Activated CD8-positive, alpha-beta memory T cell treated with anti-CD3 and anti-CD28 coated beads, Interleukin-2, amount 10 ng/mL, durations not matched to agents 7 days and 5 days (primary cell): ENCODE measurements at regions of chr6 and their contacts with region 1.

Region 1: DNA sequence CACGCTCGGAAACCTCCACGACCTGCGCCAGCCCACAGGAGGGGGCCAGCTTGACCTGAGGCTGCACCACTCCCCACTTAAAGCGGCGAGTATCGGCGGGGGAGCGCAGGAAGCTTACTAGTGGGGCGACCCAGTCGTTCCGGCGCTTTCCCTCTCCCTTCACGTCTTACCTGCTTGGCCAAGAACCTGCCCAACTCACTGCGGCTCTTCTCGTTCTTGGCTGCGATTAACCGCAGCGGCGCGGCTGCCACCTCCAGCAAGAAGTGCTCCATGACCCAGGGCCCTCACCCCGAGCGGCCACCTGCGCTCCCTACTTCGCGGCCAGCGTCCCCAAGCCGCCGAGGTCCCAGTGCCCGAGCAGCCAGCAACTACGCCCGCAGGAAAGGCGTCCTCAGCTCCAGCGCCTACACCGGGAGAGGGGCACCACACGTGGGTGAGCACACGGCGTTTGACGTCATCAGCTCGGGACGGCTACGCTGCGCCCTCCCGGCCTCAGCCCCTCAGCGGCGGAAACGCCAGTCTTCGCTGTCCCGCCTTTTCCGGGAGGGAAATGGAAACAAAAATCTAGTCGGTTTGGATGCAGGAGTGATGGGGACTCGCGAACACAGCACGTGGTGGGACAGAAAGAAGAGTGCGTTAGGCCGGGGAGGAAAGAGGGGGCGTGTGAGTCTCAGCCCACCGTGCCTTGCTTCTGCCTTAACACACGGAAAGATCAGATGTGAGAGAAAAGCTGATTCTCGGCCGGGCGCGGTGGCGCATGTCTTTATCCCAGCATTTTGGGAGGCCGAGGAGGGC is at the start of gene MDN1:
- DNase-seq: peak; percentile 95
- ATAC-seq: peak; percentile 96
- H3K4me3 Mint-ChIP-seq: peak within 1 kb of the TSS; percentile 89
- H3K27ac Mint-ChIP-seq: peak within 1 kb of the TSS; percentile 90
- H3K4me1 Mint-ChIP-seq: peaks cover 26% of the 10 kb centered on the region
- H3K27me3 Mint-ChIP-seq: no peaks in the 10 kb centered on the region
- total RNA-seq, gene MDN1: 54.7 to 56.2 TPM

Region 2: GRCh38 chr6:89829591-89830385 is 10.3 kb after region 1 on chr6 and contains the start of gene CASP8AP2:
- CTCF ChIA-PET with region 1: interaction called, 29 read pairs
- DNase-seq: peak; percentile 98
- ATAC-seq: peak; percentile 98
- H3K4me3 Mint-ChIP-seq: peak within 1 kb of the TSS; percentile 100
- H3K27ac Mint-ChIP-seq: peak within 1 kb of the TSS; percentile 99
- H3K4me1 Mint-ChIP-seq: peaks cover 35% of the 10 kb centered on the region
- H3K27me3 Mint-ChIP-seq: no peaks in the 10 kb centered on the region
- total RNA-seq, gene CASP8AP2: 34.7 to 40.8 TPM